ENCODE measurements at regions of chr5 and their contacts with region 1.

Region 1: DNA sequence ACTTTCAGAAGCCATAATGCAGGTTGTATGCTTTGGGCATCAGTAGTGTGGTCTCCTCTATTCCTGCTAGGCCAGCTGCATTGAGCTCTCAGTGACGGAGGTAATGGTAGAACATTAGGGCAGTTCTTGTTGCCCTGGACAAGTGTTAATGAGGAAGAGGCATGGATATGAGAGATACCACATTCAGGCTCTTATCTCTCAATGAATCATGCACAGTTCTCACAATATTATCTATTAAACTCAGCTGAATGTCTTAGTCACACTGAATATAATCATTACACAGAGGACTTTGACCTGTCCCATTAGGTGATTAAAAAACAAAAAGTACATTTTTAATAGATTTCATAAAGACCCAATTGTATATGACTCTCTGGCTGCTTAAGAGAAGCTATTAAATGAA is 76.6 kb upstream of the SSBP2 start:
- DNase-seq: no peak
- H3K4me3 ChIP-seq: no peak overlapping the region
- H3K27ac ChIP-seq: no peak overlapping the region
- H3K4me1 ChIP-seq: no peaks in the 10 kb centered on the region; a peak in 1 of 7 replicates
- H3K27me3 ChIP-seq: no peaks in the 10 kb centered on the region
- CTCF ChIP-seq: no peak
- EP300 ChIP-seq: no peak
- POLR2A ChIP-seq: no peak
- RAD21 ChIP-seq: no peak

Region 2: GRCh38 chr5:81726297-81726696 is 101.2 kb before region 1 on chr5:
- CTCF ChIA-PET with region 1: no interaction called
- POLR2A ChIA-PET with region 1: no interaction called
- DNase-seq: no peak
- H3K4me3 ChIP-seq: no peak overlapping the region
- H3K27ac ChIP-seq: no peak overlapping the region
- H3K4me1 ChIP-seq: peaks cover 0 to 7% (median 0%) of the 10 kb centered on the region in 4 experiments; a peak in 1 of 7 replicates
- H3K27me3 ChIP-seq: no peaks in the 10 kb centered on the region
- CTCF ChIP-seq: no peak
- EP300 ChIP-seq: no peak
- POLR2A ChIP-seq: no peak
- RAD21 ChIP-seq: no peak

Region 3: GRCh38 chr5:81838307-81838906 is 10.9 kb after region 1 on chr5:
- CTCF ChIA-PET with region 1: interaction called, 10 read pairs
- POLR2A ChIA-PET with region 1: no interaction called
- DNase-seq: no peak
- H3K4me3 ChIP-seq: no peak overlapping the region
- H3K27ac ChIP-seq: no peak overlapping the region
- H3K4me1 ChIP-seq: peaks cover 0 to 9% (median 4%) of the 10 kb centered on the region in 4 experiments; a peak in 3 of 7 replicates
- H3K27me3 ChIP-seq: no peaks in the 10 kb centered on the region
- CTCF ChIP-seq: peak; percentile 36 to 64 (median 43)
- EP300 ChIP-seq: no peak
- POLR2A ChIP-seq: no peak
- RAD21 ChIP-seq: peak; percentile 58 to 73

Measured in H1 (cell line).